MCF 10A (cell line): ENCODE measurements at regions of chr2 and their contacts with region 1.

Region 1: GRCh38 chr2:233449081-233449901 is 95.0 kb downstream of the DGKD start:
- DNase-seq: peak; percentile 30
- H3K4me3 Mint-ChIP-seq: no peak overlapping the region
- H3K27ac Mint-ChIP-seq: no peak overlapping the region
- H3K4me1 Mint-ChIP-seq: peaks cover 4% of the 10 kb centered on the region
- H3K27me3 Mint-ChIP-seq: no peaks in the 10 kb centered on the region
- CTCF ChIP-seq: peak; percentile 53

Region 2: DNA sequence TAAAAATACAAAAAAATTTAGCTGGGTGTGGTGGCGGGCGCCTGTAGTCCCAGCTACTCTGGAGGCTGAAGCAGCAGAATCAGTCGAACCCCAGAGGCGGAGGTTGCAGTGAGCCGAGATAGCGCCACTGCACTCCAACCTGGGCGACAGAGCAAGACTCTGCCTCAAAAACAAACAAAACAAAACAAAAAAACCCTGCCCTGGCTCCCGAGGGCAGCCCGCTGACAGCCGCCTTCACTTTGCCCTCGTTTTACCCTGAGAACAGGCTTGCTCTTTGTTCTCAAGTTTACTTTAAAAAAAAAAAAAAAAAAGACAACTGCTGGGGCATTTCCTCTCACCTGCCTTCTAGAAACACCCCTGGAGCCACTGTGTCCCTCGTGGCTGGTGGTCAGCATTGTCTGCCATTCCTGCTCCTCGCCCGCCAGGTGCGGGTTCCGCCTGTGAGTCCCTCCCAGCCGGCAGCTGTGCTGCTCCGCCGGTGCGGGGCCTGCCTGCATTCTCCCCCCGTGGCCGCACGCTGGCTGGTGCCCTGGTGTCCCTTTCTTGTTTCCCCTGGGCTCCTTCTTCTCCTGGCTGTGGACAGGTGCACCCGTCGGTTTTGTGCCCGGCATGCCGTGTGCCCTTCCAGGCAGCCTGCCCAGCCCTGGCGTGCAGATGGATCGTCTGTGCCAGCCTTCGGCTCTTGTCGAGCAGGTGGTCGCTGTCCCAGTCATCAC is 11.6 kb after region 1 on chr2:
- CTCF ChIA-PET with region 1: no interaction called
- POLR2A ChIA-PET with region 1: no interaction called
- intact Hi-C with region 1: no loop called
- DNase-seq: no peak
- H3K4me3 Mint-ChIP-seq: no peak overlapping the region
- H3K27ac Mint-ChIP-seq: no peak overlapping the region
- H3K4me1 Mint-ChIP-seq: no peaks in the 10 kb centered on the region
- H3K27me3 Mint-ChIP-seq: no peaks in the 10 kb centered on the region
- CTCF ChIP-seq: no peak

Region 3: GRCh38 chr2:233480490-233481202 is 31.4 kb after region 1 on chr2:
- CTCF ChIA-PET with region 1: no interaction called
- POLR2A ChIA-PET with region 1: no interaction called
- intact Hi-C with region 1: no loop called
- DNase-seq: no peak
- H3K4me3 Mint-ChIP-seq: no peak overlapping the region
- H3K27ac Mint-ChIP-seq: peak overlapping the region; percentile 86
- H3K4me1 Mint-ChIP-seq: peaks cover 6% of the 10 kb centered on the region
- H3K27me3 Mint-ChIP-seq: no peaks in the 10 kb centered on the region
- CTCF ChIP-seq: peak; percentile 11

Region 4: GRCh38 chr2:233832869-233833311 is 383.6 kb after region 1 on chr2:
- CTCF ChIA-PET with region 1: interaction called, 12 read pairs
- POLR2A ChIA-PET with region 1: interaction called, 3 read pairs
- intact Hi-C with region 1: loop called (anchors 2 kb)
- DNase-seq: peak; percentile 68
- H3K4me3 Mint-ChIP-seq: no peak overlapping the region
- H3K27ac Mint-ChIP-seq: no peak overlapping the region
- H3K4me1 Mint-ChIP-seq: no peaks in the 10 kb centered on the region
- H3K27me3 Mint-ChIP-seq: no peaks in the 10 kb centered on the region
- CTCF ChIP-seq: peak; percentile 26